Ascending aorta (tissue), 2 donors: ENCODE measurements at regions of chr2 and their contacts with region 1.

Region 1: DNA sequence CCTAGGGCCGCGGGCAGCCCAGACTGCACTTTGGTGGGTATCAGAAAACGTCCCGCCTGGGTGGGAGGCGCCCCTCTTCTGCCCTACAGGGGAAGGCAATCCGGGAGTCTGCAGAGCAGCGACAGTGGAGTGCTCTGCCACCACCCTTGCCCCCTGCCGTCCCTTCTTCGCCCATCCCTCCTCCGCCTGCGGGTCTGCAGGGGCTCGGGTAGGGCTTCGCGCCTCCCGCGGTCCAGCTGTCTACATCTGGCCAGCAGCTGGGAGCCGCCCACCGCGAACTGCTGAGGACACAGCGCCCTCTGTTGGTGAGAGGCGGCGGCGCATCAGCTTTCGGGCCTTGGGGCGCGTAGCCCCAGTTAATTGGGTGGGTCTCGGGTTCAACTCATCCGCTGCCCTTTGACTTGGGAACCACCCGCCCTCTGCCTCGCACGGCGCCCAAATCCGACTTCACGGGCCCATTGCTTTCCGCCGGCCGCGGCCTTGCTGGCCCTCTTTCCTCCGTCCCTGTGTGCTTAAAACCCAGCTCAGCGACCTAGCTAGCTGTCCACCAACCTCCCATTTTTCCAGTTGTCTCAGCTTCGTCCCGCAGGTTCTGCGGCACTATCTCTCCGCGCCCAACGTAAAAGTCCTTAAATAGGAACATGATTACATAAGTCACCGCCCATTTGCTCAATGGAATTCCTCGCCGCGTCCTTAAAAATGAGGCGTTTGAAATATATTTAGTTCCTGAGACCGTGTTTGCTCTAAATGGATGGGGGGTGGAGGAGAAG is 17.6 kb downstream of the WNT10A start:
- DNase-seq: peak in 1 of 2 donors; percentile 80
- H3K4me3 ChIP-seq: peak overlapping the region; percentile 23 to 52
- H3K27ac ChIP-seq: no peak overlapping the region
- H3K4me1 ChIP-seq: peaks cover 11 to 16% of the 10 kb centered on the region in 2 donors
- H3K27me3 ChIP-seq: peaks cover 19% of the 10 kb centered on the region
- CTCF ChIP-seq: peak; percentile 95 to 98 (median 97)

Region 2: DNA sequence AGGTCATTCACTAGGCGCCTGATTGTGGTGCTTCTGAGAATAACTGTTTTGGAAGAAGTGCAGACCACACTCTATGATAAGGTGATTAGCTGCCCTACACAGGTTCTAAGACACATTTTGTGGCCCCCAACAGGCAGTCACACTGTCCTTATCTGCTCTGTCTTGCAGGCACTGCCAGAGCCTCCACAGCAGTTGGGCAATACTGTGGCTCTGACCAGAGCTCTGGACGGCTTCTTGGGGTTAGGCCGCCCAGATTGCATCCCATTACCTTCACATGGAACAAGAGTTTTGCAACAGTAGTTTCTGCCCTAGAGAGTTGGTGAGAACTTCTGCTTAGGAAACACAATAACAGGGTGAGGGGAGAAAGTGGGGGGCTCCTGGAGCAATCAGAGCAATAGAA is 806.5 kb before region 1 on chr2:
- intact Hi-C with region 1: no loop called
- DNase-seq: no peak
- H3K4me3 ChIP-seq: no peak overlapping the region
- H3K27ac ChIP-seq: no peak overlapping the region
- H3K4me1 ChIP-seq: no peaks in the 10 kb centered on the region
- H3K27me3 ChIP-seq: no peaks in the 10 kb centered on the region
- CTCF ChIP-seq: no peak

Region 3: GRCh38 chr2:218876562-218877219 is 21.6 kb before region 1 on chr2:
- intact Hi-C with region 1: loop called (anchors 1 kb)
- DNase-seq: peak in 1 of 2 donors; percentile 78
- H3K4me3 ChIP-seq: no peak overlapping the region
- H3K27ac ChIP-seq: no peak overlapping the region
- H3K4me1 ChIP-seq: peaks cover 0 to 12% of the 10 kb centered on the region in 2 donors
- H3K27me3 ChIP-seq: peaks cover 31% of the 10 kb centered on the region
- CTCF ChIP-seq: peak; percentile 88 to 97 (median 92)

Region 4: DNA sequence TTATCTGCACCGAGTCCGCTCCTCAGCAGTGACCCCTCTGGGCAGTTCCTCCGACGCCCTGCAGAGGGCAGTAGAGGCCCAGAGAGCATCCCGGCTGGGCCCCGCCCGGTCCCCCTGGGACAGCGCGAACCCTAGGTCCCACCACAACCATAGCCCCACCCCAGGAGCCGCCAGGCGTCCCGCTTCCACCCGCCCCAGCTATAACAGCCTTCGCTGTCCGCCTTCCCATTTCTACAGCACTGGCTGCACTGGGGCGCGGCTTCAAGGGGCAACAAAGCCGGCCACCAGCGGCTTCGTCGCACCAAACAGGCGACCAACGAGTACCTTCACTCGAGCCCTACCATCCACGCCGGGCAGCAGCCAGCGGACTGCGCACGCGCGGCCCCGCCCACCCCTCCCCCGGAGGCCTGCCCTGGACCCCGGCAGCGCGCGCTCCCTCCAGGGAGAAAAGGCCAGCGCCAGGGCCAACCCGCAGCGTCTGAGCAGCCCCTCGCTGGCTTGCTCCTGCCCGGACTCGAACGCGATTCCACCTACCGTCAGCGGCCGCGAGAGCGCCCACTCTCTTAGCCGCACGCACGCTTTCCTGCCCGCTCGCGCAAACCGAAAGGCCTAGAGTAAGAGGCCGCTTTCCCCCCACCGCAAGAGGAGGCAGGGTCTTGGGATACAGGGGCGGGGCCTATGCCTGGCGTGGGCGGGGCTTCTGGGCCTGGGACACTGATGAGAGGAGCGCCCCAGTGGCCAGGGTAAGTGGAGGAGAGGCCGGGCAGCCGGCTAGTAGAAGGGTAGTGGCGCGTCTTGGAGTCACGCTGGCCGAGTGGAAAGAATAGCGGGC is 262.1 kb after region 1 on chr2 and contains the start of gene NHEJ1:
- intact Hi-C with region 1: no loop called
- DNase-seq: peak; percentile 88 to 98
- H3K4me3 ChIP-seq: peak within 1 kb of the TSS; percentile 66 to 86
- H3K27ac ChIP-seq: peak within 1 kb of the TSS; percentile 86 to 89
- H3K4me1 ChIP-seq: peaks cover 0 to 8% of the 10 kb centered on the region in 2 donors
- H3K27me3 ChIP-seq: no peaks in the 10 kb centered on the region
- CTCF ChIP-seq: peak; percentile 97 to 100 (median 100)
- total RNA-seq, gene NHEJ1: 21.6 TPM